Naive thymus-derived CD4-positive, alpha-beta T cell (primary cell): ENCODE measurements at regions of chr3 and their contacts with region 1.

Region 1: GRCh38 chr3:41690766-41691563 is 270.9 kb downstream of the ULK4 start:
- DNase-seq: no peak
- ATAC-seq: no peak
- H3K4me3 ChIP-seq: no peak overlapping the region
- H3K4me3 Mint-ChIP-seq: no peak overlapping the region
- H3K27ac ChIP-seq: no peak overlapping the region
- H3K27ac Mint-ChIP-seq: peak overlapping the region in 2 of 9 donors; percentile 11 to 20
- H3K4me1 ChIP-seq: no peaks in the 10 kb centered on the region
- H3K4me1 Mint-ChIP-seq: peaks cover 0 to 10% (median 8%) of the 10 kb centered on the region in 7 donors
- H3K27me3 ChIP-seq: no peaks in the 10 kb centered on the region
- H3K27me3 Mint-ChIP-seq: no peaks in the 10 kb centered on the region

Region 2: DNA sequence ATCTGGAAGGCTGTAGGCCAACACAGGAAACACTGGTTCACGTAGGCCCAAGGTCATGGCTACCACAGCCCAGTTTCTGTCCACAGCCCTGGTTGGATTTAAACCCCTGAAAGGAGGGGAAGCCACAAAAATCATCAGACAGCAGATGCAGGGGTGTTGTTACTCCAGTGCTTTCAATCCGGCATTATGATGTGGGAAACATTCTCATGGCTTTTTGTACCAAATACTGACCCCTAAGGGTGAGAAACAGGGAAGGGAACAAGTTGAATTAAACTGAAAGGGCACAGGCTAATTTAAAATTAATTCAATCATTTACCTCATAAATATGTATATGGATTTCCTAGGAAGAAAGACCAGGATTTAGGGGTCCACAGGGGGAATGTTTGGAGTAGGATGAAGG is 116.1 kb before region 1 on chr3:
- CTCF ChIA-PET with region 1: no interaction called
- POLR2A ChIA-PET with region 1: no interaction called
- intact Hi-C with region 1: no loop called
- DNase-seq: no peak
- ATAC-seq: no peak
- H3K4me3 ChIP-seq: no peak overlapping the region
- H3K4me3 Mint-ChIP-seq: no peak overlapping the region
- H3K27ac ChIP-seq: no peak overlapping the region
- H3K27ac Mint-ChIP-seq: no peak overlapping the region
- H3K4me1 ChIP-seq: no peaks in the 10 kb centered on the region
- H3K4me1 Mint-ChIP-seq: no peaks in the 10 kb centered on the region
- H3K27me3 ChIP-seq: no peaks in the 10 kb centered on the region
- H3K27me3 Mint-ChIP-seq: no peaks in the 10 kb centered on the region

Region 3: GRCh38 chr3:42090973-42091731 is 400.2 kb after region 1 on chr3 and contains the start of gene TRAK1:
- CTCF ChIA-PET with region 1: no interaction called
- POLR2A ChIA-PET with region 1: no interaction called
- intact Hi-C with region 1: loop called in 1 of 2 experiments (anchors 10 kb)
- DNase-seq: no peak
- ATAC-seq: no peak
- H3K4me3 ChIP-seq: no peak within 1 kb of the TSS
- H3K4me3 Mint-ChIP-seq: no peak within 1 kb of the TSS
- H3K27ac ChIP-seq: no peak within 1 kb of the TSS
- H3K27ac Mint-ChIP-seq: peak within 1 kb of the TSS in 8 of 9 donors; percentile 14 to 75 (median 46)
- H3K4me1 ChIP-seq: no peaks in the 10 kb centered on the region
- H3K4me1 Mint-ChIP-seq: peaks cover 18 to 36% (median 27%) of the 10 kb centered on the region in 7 donors
- H3K27me3 ChIP-seq: no peaks in the 10 kb centered on the region
- H3K27me3 Mint-ChIP-seq: no peaks in the 10 kb centered on the region
- total RNA-seq, gene TRAK1: 13.2 to 30.4 (median 20.4) TPM